Transverse colon (tissue), 4 donors: ENCODE measurements at regions of chr13 and their contacts with region 1.

Region 1: DNA sequence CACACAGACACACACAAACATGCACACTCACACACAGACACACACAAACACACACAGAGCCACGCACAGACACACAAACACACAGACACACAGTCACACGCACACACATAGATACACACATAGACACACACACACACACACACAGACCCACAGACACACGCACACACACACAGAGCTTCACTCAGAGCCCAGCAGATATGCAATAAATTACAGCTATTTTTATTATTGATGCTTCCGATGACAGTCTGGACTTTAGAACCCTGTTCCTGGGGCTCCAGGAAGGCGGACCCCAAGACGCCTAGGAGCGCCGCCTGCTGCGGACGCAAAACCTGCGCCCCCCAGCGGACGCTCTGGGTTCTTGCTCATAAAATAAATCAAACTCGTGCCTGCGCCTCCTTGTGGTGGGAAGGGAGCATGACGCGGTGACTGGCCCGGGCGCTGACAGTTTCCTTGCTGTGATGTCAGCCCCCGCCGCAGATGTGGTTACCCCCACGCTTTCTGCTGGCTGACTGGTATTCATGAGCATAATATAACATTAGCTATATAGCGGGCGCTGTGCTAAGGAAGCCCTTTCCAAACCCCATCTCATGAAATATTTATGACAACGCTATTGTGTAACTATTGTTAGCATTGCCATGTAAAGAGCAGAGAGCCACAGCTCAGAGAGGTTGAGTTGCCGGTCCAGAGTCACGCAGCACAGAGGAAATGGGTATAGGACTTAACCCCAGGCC is 64.4 kb upstream of the TM9SF2 start:
- DNase-seq: peak; percentile 90
- H3K4me3 ChIP-seq: no peak overlapping the region
- H3K27ac ChIP-seq: no peak overlapping the region
- H3K4me1 ChIP-seq: peaks cover 0 to 15% (median 3%) of the 10 kb centered on the region in 4 donors
- H3K27me3 ChIP-seq: peaks cover 13% of the 10 kb centered on the region
- CTCF ChIP-seq: peak; percentile 100
- EP300 ChIP-seq: no peak
- POLR2A ChIP-seq: peak; percentile 9

Region 2: GRCh38 chr13:99053636-99054233 is 383.1 kb before region 1 on chr13:
- in situ Hi-C with region 1: no loop called
- intact Hi-C with region 1: no loop called
- DNase-seq: no peak
- H3K4me3 ChIP-seq: no peak overlapping the region
- H3K27ac ChIP-seq: peak overlapping the region in 2 of 4 donors; percentile 9 to 12
- H3K4me1 ChIP-seq: peaks cover 4 to 55% (median 15%) of the 10 kb centered on the region in 4 donors
- H3K27me3 ChIP-seq: no peaks in the 10 kb centered on the region
- CTCF ChIP-seq: no peak
- EP300 ChIP-seq: no peak
- POLR2A ChIP-seq: no peak

Region 3: GRCh38 chr13:99269627-99270241 is 167.1 kb before region 1 on chr13:
- in situ Hi-C with region 1: loop called (anchors 5 to 10 kb)
- intact Hi-C with region 1: no loop called
- DNase-seq: no peak
- H3K4me3 ChIP-seq: no peak overlapping the region
- H3K27ac ChIP-seq: peak overlapping the region in 2 of 4 donors; percentile 7 to 13
- H3K4me1 ChIP-seq: peaks cover 0 to 8% (median 0%) of the 10 kb centered on the region in 4 donors
- H3K27me3 ChIP-seq: no peaks in the 10 kb centered on the region
- CTCF ChIP-seq: peak; percentile 50 to 62 (median 58)
- EP300 ChIP-seq: no peak
- POLR2A ChIP-seq: no peak

Region 4: DNA sequence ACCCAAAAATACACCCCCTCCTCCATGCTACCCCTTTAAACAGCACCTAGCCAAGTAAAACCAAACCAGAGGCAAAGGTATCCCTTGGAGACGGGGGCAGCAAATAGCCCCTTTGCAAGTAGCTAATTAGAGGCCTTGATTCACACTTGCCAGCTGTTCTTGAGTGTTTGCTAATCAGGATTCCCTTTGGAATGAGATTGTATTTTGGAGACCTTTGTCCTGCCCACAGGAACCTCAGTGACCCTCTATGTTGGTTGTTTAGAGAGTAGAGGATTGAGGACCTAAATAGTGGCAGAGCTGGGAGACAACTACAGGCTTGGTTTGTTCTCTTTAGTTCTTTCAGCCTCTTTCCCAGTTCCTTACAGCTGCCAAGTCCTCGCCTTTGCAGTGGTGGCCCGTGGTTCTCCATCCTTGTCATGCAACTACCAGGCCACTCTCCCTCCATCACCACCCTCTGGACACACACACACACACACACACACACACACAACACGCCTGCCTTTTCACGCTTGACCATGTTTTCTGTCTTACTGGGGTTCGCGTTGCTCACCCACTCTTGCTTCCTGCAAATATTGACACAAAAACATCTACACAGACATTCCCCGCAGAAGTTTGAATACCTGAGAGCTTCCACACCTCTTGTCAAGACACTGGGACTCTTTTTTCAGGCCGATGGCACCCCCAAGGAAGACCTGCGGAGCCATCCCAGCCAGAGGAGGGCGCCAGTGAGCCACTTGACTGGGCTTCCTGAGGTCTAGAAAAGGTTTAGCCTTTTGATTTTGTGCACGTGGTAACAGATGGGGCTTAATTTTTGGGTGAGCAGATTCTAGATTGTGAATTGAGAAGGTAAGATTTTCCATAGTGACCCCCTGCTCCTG is 49.7 kb before region 1 on chr13:
- in situ Hi-C with region 1: loop called in 1 of 4 experiments (anchors 10 kb)
- intact Hi-C with region 1: no loop called
- DNase-seq: peak; percentile 80
- H3K4me3 ChIP-seq: no peak overlapping the region
- H3K27ac ChIP-seq: no peak overlapping the region
- H3K4me1 ChIP-seq: peaks cover 4 to 10% (median 8%) of the 10 kb centered on the region in 4 donors
- H3K27me3 ChIP-seq: no peaks in the 10 kb centered on the region
- CTCF ChIP-seq: peak; percentile 45 to 75 (median 67)
- EP300 ChIP-seq: no peak
- POLR2A ChIP-seq: no peak